ENCODE measurements at regions of chr11 and their contacts with region 1.

Region 1: GRCh38 chr11:129223701-129224149 is 31.6 kb upstream of the ARHGAP32 start:
- DNase-seq: no peak
- H3K4me3 ChIP-seq: no peak overlapping the region
- H3K27ac ChIP-seq: no peak overlapping the region
- H3K4me1 ChIP-seq: peaks cover 0 to 17% (median 11%) of the 10 kb centered on the region in 4 donors
- H3K27me3 ChIP-seq: no peaks in the 10 kb centered on the region
- CTCF ChIP-seq: no peak
- EP300 ChIP-seq: no peak
- POLR2A ChIP-seq: no peak

Region 2: DNA sequence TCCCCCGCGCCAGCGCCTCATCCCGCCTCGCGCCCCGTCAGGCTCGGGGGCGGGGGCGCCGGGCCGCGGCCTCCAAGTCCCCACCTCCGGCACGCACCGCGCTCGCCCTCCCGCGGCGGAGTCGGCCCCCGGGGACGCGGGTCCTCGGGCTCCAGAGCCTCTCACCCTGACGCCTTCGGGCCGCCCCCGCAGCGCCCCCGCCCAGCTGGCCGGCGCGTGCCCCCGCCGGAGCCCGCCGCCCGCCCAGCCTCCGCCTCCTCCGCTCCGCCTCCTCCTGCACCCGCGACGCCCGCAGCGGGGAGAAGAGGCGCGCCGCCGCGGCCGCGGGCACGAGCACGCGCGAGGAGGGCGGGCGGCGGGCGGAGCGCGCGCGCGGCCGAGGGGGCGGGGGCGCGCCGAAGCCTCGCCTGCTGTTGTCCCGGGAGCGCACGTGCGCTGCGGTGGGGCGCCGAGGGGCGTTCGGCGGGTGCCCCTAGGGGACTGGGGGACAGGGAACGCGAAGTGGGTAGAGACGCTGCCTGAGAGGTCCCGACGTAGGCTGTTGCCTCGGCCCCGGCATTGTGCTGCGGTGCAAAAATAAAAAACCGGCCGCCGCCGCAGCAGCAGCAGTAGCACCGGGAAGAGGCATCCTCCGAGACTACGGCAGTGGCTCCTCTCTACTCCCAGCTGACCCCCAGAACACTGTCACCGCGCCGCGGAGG is 55.8 kb after region 1 on chr11:
- intact Hi-C with region 1: loop called (anchors 10 kb)
- DNase-seq: no peak
- H3K4me3 ChIP-seq: peak overlapping the region; percentile 68 to 78 (median 73)
- H3K27ac ChIP-seq: peak overlapping the region; percentile 8 to 70 (median 60)
- H3K4me1 ChIP-seq: peaks cover 23 to 46% (median 40%) of the 10 kb centered on the region in 4 donors
- H3K27me3 ChIP-seq: no peaks in the 10 kb centered on the region
- CTCF ChIP-seq: no peak
- EP300 ChIP-seq: no peak
- POLR2A ChIP-seq: no peak

Region 3: GRCh38 chr11:129346916-129347315 is 123.2 kb after region 1 on chr11:
- intact Hi-C with region 1: no loop called
- DNase-seq: no peak
- H3K4me3 ChIP-seq: no peak overlapping the region
- H3K27ac ChIP-seq: no peak overlapping the region
- H3K4me1 ChIP-seq: no peaks in the 10 kb centered on the region
- H3K27me3 ChIP-seq: peaks cover 0 to 10% (median 0%) of the 10 kb centered on the region in 4 donors
- CTCF ChIP-seq: no peak
- EP300 ChIP-seq: no peak
- POLR2A ChIP-seq: no peak

Region 4: DNA sequence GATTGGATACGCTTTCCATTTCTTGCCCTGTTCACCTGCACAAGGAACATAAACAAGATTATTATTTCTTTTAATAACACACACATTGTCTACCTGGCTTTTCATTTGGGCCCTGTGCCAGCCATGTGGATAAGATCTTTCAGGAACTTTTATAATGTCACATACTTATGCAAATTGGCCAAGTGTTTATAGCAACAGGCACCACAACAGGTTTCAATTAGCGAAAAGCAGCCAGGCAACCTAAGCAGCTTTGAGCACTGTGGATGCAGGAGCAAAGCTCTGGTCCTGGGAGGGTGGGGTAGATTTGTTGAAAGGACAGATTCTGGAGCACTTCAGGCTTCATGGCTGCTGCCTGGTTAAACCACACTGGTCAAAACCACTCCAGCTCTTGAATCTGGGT is 369.4 kb after region 1 on chr11:
- intact Hi-C with region 1: no loop called
- DNase-seq: no peak
- H3K4me3 ChIP-seq: no peak overlapping the region
- H3K27ac ChIP-seq: no peak overlapping the region
- H3K4me1 ChIP-seq: no peaks in the 10 kb centered on the region
- H3K27me3 ChIP-seq: peaks cover 0 to 34% (median 0%) of the 10 kb centered on the region in 4 donors
- CTCF ChIP-seq: no peak
- EP300 ChIP-seq: no peak
- POLR2A ChIP-seq: no peak

Region 5: DNA sequence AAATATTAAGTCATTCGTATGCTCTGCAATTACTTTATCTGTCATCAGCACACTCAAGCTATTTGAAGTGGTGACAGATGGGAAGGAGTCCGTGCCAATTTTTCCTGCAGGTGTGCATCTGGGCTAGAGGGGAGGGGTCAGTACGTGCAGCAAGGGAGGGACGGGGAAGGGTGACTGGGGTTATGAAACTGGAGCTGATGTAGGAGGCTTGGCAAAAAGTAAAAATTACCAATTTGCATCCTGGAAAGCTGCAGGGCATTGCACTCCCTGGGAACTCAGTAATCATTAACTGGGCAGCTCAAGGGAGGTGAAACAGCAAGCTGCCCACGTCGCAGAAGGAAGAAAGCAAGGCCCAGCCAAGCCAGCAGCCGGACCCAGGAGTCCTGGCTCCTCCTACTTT is 504.9 kb after region 1 on chr11:
- intact Hi-C with region 1: no loop called
- DNase-seq: no peak
- H3K4me3 ChIP-seq: no peak overlapping the region
- H3K27ac ChIP-seq: no peak overlapping the region
- H3K4me1 ChIP-seq: no peaks in the 10 kb centered on the region
- H3K27me3 ChIP-seq: peaks cover 0 to 32% (median 0%) of the 10 kb centered on the region in 4 donors
- CTCF ChIP-seq: no peak
- EP300 ChIP-seq: no peak
- POLR2A ChIP-seq: no peak

Measured in esophagus muscularis mucosa (tissue), 4 donors.